ENCODE measurements at regions of chr14 and their contacts with region 1.

Region 1: DNA sequence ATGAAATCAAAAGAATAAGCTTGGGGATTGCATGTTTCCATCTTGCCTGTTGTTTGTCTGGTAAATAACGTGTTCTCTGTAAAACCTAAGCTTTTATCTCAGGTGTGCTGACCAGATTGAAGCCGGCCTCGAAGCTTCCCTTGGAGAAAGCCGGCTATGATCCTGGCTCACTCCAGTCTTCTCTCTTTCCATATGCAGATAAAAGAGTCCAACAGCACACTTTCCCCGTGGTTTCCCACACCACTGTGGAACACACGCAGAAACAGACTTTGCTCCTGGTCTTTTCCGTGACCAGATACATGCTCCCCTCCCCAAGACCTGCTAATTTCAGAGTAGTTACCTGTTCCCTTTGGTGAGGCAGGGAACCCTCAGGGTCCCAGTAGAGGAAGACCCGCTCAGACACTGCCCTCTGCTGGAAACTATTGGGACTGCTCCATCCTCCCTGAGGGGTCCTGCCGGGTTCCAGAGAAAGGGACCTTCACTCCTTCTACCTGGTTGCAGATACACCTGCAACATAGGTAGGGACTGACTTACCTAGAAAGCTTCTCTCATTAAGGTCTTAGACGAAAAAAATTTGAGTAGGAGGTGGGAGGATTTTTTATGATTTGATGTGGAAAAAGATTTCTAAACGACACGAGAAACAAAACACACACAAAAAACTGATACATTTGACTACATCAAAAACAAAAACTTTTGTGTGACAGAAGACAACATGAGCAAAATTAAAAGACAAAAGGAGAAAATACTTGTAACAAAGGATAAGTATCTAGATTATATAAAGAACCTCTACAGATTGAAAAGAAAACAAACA is 415.5 kb upstream of the CCDC196 start:
- DNase-seq: peak; percentile 79
- ATAC-seq: peak; percentile 63
- H3K4me3 Mint-ChIP-seq: no peak overlapping the region
- H3K27ac Mint-ChIP-seq: no peak overlapping the region
- H3K4me1 Mint-ChIP-seq: no peaks in the 10 kb centered on the region
- H3K27me3 Mint-ChIP-seq: no peaks in the 10 kb centered on the region

Region 2: DNA sequence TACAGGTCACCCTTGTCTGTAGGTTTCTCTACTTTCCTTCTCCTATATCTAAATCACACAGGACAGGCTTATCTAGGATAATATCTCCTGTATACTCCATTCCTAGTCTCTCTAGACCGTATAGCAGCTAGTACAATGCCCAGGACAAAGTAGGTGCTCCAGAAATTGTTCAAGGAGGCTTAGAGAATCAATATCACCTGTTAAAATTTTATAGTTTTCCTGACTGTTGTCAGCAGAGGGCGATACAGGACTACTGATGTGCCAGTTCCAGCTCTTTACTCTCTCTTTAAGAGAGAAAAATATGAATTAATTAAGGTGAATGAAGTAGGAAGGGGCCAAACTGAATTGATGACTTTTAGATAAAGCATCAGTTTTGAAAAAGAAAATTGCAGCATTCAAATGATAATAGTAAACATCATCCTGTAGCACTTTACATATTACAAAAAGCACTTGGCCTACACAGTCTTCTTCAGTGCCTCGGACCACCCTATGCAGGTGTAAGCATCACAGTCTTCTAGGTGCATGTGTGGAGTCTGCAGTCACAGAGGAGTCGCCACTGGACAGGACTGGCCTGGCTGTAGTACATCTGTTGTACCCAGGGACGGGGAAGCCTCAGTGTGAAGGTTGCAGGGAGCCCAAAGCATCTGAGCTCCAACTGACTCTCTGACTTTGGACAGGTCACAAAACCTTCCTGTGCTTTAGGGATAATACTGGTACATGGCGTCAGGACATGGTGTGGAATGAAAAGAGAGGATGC is 906.5 kb before region 1 on chr14:
- CTCF ChIA-PET with region 1: interaction called, 5 read pairs
- POLR2A ChIA-PET with region 1: no interaction called
- intact Hi-C with region 1: loop called (anchors 1 kb)
- DNase-seq: peak; percentile 56
- ATAC-seq: peak; percentile 60
- H3K4me3 Mint-ChIP-seq: no peak overlapping the region
- H3K27ac Mint-ChIP-seq: no peak overlapping the region
- H3K4me1 Mint-ChIP-seq: peaks cover 14% of the 10 kb centered on the region
- H3K27me3 Mint-ChIP-seq: no peaks in the 10 kb centered on the region

Region 3: GRCh38 chr14:65731933-65732510 is 338.7 kb before region 1 on chr14:
- CTCF ChIA-PET with region 1: no interaction called
- POLR2A ChIA-PET with region 1: no interaction called
- intact Hi-C with region 1: loop called in 1 of 2 experiments (anchors 1 kb)
- DNase-seq: peak; percentile 11
- ATAC-seq: peak; percentile 100
- H3K4me3 Mint-ChIP-seq: no peak overlapping the region
- H3K27ac Mint-ChIP-seq: peak overlapping the region; percentile 77
- H3K4me1 Mint-ChIP-seq: peaks cover 12% of the 10 kb centered on the region
- H3K27me3 Mint-ChIP-seq: no peaks in the 10 kb centered on the region

Measured in activated CD4-positive, alpha-beta T cell treated with anti-CD3 and anti-CD28 coated beads for 36 hours (primary cell).